ENCODE measurements at regions of chr2 and their contacts with region 1.

Region 1: GRCh38 chr2:179773986-179774385 is 87.4 kb downstream of the ZNF385B start:
- DNase-seq: no peak
- ATAC-seq: no peak

Region 2: DNA sequence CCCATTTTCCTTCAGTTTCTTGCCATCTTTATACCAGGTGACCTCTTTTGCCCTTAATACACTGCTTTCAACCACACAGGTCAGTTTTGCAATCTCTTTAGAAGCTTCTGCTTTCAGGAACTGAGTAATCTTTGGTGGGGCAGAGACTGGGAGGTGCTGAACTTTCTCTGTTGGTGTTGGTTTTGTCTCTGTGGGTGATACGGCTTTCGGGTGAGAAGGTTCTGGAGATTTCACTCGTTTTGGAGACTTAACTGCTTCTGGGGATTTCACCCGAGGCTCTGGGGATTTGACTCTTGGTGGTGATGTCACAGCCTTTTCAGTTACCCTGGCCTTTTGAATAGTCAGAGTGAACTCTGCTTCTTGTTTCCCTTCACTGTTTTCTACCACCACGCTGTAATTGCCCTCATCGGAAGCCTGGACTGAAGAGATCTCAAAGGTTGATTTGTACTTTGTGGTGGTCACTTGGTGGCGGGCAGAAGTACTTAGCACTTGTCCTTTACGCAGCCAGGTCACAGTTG is 1243.3 kb before region 1 on chr2:
- intact Hi-C with region 1: loop called (anchors 10 kb)
- DNase-seq: no peak
- ATAC-seq: no peak

Region 3: DNA sequence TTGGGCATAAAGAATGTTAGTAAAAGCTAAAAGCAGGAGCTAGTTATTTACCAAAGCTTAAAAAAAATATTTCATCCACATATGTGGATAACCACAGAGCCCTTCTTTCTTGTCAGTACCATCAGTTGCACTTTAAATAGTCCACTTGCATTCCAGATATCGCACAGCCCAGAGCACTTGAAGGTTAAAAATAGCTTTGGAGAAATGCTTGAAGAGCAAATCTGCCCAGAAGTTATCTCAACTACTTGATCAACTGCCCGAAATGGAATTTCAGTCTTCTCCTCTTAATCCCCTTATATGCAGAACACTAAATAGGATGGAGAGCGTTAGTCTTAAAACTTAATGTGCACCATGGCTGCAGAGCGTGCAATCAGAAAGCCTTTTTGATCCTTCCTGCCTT is 1145.4 kb before region 1 on chr2:
- intact Hi-C with region 1: no loop called
- DNase-seq: no peak
- ATAC-seq: no peak

Region 4: GRCh38 chr2:179454443-179455171 is 319.4 kb before region 1 on chr2:
- intact Hi-C with region 1: no loop called
- DNase-seq: no peak
- ATAC-seq: no peak

Region 5: DNA sequence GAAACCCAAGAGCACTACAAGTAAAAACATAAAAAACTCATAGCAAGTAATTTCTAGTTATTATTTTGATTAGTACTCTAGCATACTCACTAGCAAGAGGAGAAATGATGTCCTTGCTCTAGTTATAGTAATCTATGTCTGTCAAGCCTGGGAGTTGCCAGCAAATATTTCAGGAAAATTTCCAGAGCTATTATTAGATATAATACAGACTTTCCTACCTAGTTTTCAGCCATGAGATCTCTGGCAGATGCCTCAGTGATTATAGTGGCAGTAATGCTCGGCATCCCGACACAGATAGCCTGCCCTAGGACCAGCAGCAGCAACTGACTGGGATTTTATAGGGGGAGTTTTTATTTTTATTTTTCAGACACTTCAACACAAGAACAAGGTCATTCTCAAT is 137.0 kb before region 1 on chr2:
- intact Hi-C with region 1: no loop called
- DNase-seq: no peak
- ATAC-seq: no peak

Region 6: DNA sequence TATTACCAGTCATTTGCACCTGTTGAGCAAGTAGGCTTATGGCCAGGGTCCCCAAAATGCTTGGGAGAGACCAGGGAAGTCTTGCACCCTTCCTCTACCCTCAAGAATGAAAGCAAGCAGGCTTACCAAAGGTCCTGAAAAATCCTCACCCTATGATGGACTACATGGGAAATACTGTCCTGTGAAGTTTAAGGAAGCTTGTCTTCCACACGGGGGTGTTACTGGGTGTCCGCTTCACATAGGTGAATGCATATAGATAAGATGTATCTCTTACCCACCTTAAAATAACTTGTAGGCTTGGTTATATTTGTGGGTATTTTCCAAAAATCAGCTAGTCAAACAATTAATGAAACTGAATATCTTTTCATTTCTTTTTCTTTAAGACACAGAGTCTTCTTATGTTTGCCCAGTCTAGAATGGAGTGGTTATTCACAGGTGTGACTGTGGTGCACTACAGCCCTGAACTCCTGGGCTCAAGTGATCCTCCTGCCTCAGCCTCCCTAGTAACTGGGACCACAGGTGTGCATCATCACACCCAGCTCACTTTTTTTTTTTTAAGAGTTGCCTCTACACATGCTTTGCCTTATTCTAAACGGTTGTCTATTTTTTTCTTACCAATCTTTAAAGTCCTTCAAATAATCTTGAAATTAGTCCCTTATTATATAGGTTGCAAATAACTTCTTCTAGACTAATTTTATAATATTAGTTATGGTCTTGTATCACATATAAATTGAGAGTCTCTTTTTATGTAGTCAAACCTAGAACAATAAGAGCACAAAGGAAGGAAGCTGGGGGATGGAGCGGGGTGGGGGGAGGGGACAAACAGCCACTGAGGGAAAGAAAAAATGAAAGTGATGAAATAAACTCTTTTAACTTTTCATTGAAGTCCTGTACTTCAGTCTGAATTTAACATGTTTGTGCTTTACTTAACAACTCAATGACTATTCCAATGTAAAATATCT is 1833.9 kb after region 1 on chr2:
- intact Hi-C with region 1: no loop called
- DNase-seq: no peak
- ATAC-seq: no peak